Sigmoid colon (tissue), 7 donors: ENCODE measurements at regions of chr5 and their contacts with region 1.

Region 1: GRCh38 chr5:88268385-88269184 is at the start of gene TMEM161B:
- DNase-seq: peak; percentile 94
- H3K4me3 ChIP-seq: peak within 1 kb of the TSS; percentile 64 to 81 (median 80)
- H3K27ac ChIP-seq: peak within 1 kb of the TSS; percentile 73 to 77 (median 76)
- H3K4me1 ChIP-seq: peaks cover 0 to 29% (median 26%) of the 10 kb centered on the region in 4 donors
- H3K27me3 ChIP-seq: no peaks in the 10 kb centered on the region
- CTCF ChIP-seq: no peak
- EP300 ChIP-seq: no peak
- POLR2A ChIP-seq: peak; percentile 17 to 26
- total RNA-seq, gene TMEM161B: 15.0 to 22.1 (median 17.0) TPM

Region 2: DNA sequence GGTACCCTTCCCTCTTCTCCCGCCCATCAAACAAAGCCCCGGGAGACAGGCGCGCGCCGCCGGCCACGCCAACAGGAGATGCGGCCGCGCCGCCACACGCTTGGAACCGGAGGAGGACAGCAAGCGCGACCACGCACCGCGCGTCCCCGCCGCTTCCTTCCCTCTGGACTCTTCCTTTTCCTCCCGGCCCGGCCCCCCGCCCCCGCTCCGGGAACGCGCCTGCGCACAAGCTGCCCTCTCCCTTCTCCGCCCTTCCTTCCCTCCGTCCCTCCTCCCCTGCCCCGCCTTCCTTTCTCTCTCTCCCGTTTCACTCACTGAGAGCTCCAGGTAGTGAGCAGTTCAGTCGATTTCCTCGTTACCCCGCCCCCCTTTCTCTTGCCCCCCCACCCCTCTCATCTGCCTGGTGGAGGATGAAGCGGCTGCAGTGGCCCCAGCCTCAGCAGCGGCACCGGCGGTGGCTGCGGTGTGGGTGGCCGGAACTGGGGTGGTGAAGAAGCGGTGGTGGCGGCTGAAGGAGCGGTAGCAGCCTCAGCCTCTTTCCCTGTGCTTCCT is 1000.9 kb before region 1 on chr5 and contains the start of gene RASA1:
- intact Hi-C with region 1: loop called (anchors 5 kb)
- DNase-seq: peak; percentile 96
- H3K4me3 ChIP-seq: peak within 1 kb of the TSS; percentile 78 to 98 (median 81)
- H3K27ac ChIP-seq: peak within 1 kb of the TSS; percentile 85 to 96 (median 89)
- H3K4me1 ChIP-seq: peaks cover 0 to 28% (median 20%) of the 10 kb centered on the region in 4 donors
- H3K27me3 ChIP-seq: no peaks in the 10 kb centered on the region
- CTCF ChIP-seq: no peak
- EP300 ChIP-seq: no peak
- POLR2A ChIP-seq: peak; percentile 61 to 85
- total RNA-seq, gene RASA1: 22.7 to 30.0 (median 25.3) TPM

Region 3: DNA sequence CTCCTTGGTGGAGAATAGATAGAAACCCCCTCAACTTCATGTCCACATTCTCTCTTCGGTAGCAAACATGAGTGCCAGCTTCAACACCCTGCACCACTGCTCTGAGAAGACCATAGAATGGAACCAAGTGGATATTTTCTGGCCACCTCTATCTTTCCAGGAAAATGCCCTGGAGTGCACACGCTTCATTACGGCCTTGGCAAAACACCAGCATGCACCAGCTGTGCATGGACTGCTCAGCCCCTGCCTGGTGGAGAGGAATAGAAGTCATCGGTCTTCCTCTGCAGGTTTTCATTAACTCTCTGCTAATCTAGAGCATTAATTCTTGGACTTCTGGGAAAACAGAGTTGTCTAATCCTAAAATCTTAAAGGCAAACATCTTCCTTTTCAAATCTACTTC is 211.7 kb after region 1 on chr5:
- intact Hi-C with region 1: no loop called
- DNase-seq: no peak
- H3K4me3 ChIP-seq: no peak overlapping the region
- H3K27ac ChIP-seq: no peak overlapping the region
- H3K4me1 ChIP-seq: no peaks in the 10 kb centered on the region
- H3K27me3 ChIP-seq: no peaks in the 10 kb centered on the region
- CTCF ChIP-seq: no peak
- EP300 ChIP-seq: no peak
- POLR2A ChIP-seq: no peak

Region 4: DNA sequence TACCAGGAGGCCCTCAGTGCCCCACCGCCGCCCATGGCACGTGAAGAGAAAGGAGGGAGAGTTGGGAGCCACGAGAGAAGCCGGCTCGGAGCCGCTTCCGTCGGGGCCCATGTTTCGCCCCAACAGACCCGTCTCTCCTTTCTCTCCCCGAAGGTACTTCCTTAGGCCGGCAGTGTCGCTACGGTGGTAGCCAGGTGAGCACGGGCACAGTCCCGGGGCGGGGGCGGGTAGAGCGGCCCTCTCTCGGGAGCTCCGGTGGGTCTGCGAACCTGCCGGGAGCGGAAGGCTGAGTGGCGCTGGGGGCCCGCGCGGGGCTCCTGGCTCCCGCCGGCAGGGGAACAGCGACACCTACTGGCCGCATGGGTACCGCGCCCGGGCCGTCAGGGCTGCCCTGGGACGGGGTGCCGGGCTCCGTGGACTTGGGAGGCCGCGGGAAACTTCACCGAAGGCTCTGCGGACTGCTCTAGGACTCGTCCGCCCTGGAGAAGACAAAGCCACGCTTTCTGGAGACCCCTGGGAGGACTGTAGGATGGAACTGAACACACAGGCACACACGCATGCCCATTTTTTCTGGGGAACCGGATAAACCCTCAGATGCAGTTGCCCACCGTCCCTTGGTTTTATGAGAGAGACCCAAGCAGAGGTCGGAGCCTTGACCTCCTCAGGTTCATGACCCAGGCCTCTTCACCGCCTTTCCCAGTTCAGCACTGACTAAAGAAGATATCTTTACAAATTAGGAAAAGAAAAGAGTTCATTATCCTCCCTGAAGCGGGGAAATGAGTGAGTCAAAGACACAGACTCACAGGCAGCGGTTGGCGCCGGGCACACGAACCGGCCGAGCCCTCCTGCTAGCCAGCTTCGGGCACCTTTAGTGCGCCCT is 411.9 kb after region 1 on chr5:
- intact Hi-C with region 1: loop called (anchors 10 kb)
- DNase-seq: no peak
- H3K4me3 ChIP-seq: peak overlapping the region; percentile 23 to 45 (median 40)
- H3K27ac ChIP-seq: no peak overlapping the region
- H3K4me1 ChIP-seq: peaks cover 0 to 32% (median 18%) of the 10 kb centered on the region in 4 donors
- H3K27me3 ChIP-seq: peaks cover 80 to 100% (median 98%) of the 10 kb centered on the region in 3 donors
- CTCF ChIP-seq: peak; percentile 42 to 93 (median 69)
- EP300 ChIP-seq: no peak
- POLR2A ChIP-seq: no peak